CD4-positive, alpha-beta memory T cell (primary cell): ENCODE measurements at regions of chr6 and their contacts with region 1.

Region 1: DNA sequence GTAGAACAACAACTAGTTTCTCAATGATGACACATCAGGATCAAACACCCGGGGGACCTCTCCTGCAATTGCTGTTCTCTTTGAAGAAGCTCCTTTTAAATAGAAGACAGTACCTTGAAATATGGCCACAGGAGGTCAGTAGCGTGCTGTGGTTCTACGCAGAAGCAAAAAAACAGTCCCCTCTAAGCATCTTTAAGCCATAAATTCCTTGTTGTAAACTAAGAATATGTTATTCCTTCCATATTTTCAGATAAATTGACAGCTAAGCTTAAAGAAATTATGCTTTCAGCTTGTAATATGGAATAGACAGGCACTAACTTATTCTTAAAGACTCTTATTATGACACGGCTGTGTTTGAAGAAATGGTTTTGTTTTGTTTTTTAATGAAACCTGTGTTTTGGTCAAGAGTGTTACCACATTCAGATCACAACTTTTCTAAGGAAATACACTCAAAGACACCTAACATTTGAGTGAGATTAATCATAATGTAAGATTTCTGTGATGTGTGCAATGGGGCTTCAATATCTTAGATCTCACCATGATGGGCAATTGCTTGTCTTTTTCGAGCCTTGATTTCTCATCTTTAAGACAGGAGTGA is 49.7 kb upstream of the IL20RA start:
- DNase-seq: peak; percentile 55 to 59 (median 57)
- H3K4me3 ChIP-seq: no peak overlapping the region
- H3K4me3 Mint-ChIP-seq: peak overlapping the region in 3 of 8 donors; percentile 13 to 42 (median 27)
- H3K27ac ChIP-seq: no peak overlapping the region
- H3K27ac Mint-ChIP-seq: peak overlapping the region in 3 of 7 donors; percentile 42 to 67 (median 61)
- H3K4me1 ChIP-seq: peaks cover 19% of the 10 kb centered on the region
- H3K4me1 Mint-ChIP-seq: peaks cover 12 to 26% (median 15%) of the 10 kb centered on the region in 4 donors
- H3K27me3 ChIP-seq: no peaks in the 10 kb centered on the region
- H3K27me3 Mint-ChIP-seq: peaks cover 3 to 4% of the 10 kb centered on the region in 2 donors

Region 2: GRCh38 chr6:136967876-136968752 is 126.4 kb before region 1 on chr6:
- CTCF ChIA-PET with region 1: interaction called, 5 read pairs
- POLR2A ChIA-PET with region 1: no interaction called
- intact Hi-C with region 1: loop called (anchors 1 kb)
- DNase-seq: peak in 4 of 5 donors; percentile 38 to 51 (median 46)
- H3K4me3 ChIP-seq: no peak overlapping the region
- H3K4me3 Mint-ChIP-seq: peak overlapping the region in 1 of 8 donors; percentile 17
- H3K27ac ChIP-seq: no peak overlapping the region
- H3K27ac Mint-ChIP-seq: peak overlapping the region in 1 of 7 donors; percentile 68
- H3K4me1 ChIP-seq: no peaks in the 10 kb centered on the region
- H3K4me1 Mint-ChIP-seq: peaks cover 0 to 10% (median 6%) of the 10 kb centered on the region in 4 donors
- H3K27me3 ChIP-seq: no peaks in the 10 kb centered on the region
- H3K27me3 Mint-ChIP-seq: peaks cover 10 to 32% of the 10 kb centered on the region in 2 donors

Region 3: DNA sequence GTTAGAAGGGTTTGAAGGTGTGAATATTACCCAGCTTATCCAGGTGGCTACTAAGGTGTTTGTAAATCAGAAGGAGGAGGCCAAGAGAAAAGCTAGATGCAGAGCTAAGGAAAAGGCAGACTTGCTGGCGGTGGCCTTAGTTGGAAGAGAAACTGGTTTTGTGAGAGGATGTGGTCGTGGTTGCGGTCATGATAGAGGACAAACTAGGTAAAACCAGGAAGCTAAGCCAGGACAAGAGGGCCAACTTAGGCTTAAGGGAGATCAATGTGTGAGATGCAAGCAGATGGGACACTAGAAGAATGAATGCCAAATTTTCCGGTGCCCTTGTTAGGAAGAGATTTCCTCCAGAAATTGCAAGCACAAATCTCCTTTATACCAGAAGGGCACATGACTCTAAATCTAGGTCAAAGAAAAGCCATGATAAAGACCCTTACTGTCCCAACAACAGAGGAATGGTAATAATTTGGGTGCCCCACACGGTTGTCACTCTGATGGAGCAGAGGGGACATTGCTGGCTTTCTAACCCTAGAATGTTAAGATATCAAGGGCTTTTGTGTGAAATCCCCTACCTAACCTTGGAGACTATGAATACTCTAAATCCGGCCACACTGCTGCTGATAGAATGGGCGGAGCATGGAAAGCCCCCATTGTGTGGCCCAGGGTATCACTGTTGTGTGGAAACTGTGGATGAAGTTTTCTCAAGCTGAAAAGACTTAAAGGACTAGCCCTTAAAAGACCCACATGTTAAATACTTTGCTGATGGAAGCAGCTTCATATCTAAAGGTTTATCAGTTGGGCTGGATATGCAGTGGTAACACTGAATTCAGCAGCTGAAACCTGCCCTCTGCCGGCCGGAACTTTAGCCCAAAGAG is 71.1 kb after region 1 on chr6:
- CTCF ChIA-PET with region 1: interaction called, 33 read pairs
- POLR2A ChIA-PET with region 1: interaction called, 16 read pairs
- intact Hi-C with region 1: loop called (anchors 1 kb)
- DNase-seq: peak; percentile 36 to 73 (median 43)
- H3K4me3 ChIP-seq: no peak overlapping the region
- H3K4me3 Mint-ChIP-seq: peak overlapping the region in 7 of 8 donors; percentile 31 to 78 (median 60)
- H3K27ac ChIP-seq: no peak overlapping the region
- H3K27ac Mint-ChIP-seq: peak overlapping the region; percentile 11 to 88 (median 68)
- H3K4me1 ChIP-seq: peaks cover 16% of the 10 kb centered on the region
- H3K4me1 Mint-ChIP-seq: peaks cover 14 to 43% (median 27%) of the 10 kb centered on the region in 4 donors
- H3K27me3 ChIP-seq: no peaks in the 10 kb centered on the region
- H3K27me3 Mint-ChIP-seq: peaks cover 2 to 4% of the 10 kb centered on the region in 2 donors

Region 4: DNA sequence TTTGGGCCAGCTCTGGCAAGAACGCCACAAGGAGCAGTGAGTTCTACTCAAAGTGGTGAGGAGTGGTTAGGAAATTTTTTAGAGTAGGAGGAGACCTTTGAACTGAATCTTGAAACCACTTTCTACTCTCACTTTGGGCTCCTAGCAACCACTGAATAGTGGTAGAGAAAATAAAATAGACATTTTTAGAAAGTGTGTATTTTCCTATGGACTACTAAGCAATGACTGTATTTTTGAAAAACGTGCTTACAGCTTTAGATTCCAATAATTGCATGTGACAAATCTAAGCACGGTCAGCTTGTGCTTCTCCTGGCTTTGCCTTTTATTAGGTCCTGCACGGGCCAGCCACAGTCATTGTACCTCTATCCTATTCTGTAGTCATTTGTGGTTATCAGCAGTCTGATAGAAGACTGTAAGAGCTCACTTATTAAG is 133.4 kb after region 1 on chr6:
- CTCF ChIA-PET with region 1: no interaction called
- POLR2A ChIA-PET with region 1: no interaction called
- intact Hi-C with region 1: no loop called
- DNase-seq: no peak
- H3K4me3 ChIP-seq: no peak overlapping the region
- H3K4me3 Mint-ChIP-seq: peak overlapping the region in 2 of 8 donors; percentile 38 to 60
- H3K27ac ChIP-seq: no peak overlapping the region
- H3K27ac Mint-ChIP-seq: peak overlapping the region; percentile 15 to 77 (median 46)
- H3K4me1 ChIP-seq: peaks cover 87% of the 10 kb centered on the region
- H3K4me1 Mint-ChIP-seq: peaks cover 55 to 84% (median 69%) of the 10 kb centered on the region in 4 donors
- H3K27me3 ChIP-seq: no peaks in the 10 kb centered on the region
- H3K27me3 Mint-ChIP-seq: no peaks in the 10 kb centered on the region

Region 5: GRCh38 chr6:137271245-137272183 is 177.0 kb after region 1 on chr6:
- CTCF ChIA-PET with region 1: no interaction called
- POLR2A ChIA-PET with region 1: no interaction called
- intact Hi-C with region 1: loop called (anchors 1 kb)
- DNase-seq: peak in 4 of 5 donors; percentile 26 to 36 (median 33)
- H3K4me3 ChIP-seq: no peak overlapping the region
- H3K4me3 Mint-ChIP-seq: no peak overlapping the region
- H3K27ac ChIP-seq: no peak overlapping the region
- H3K27ac Mint-ChIP-seq: no peak overlapping the region
- H3K4me1 ChIP-seq: peaks cover 6% of the 10 kb centered on the region
- H3K4me1 Mint-ChIP-seq: peaks cover 2 to 19% (median 12%) of the 10 kb centered on the region in 4 donors
- H3K27me3 ChIP-seq: no peaks in the 10 kb centered on the region
- H3K27me3 Mint-ChIP-seq: no peaks in the 10 kb centered on the region